ENCODE measurements at regions of chr6 and their contacts with region 1.

Region 1: GRCh38 chr6:81752138-81752920 is at the start of gene TENT5A:
- DNase-seq: peak; percentile 97
- ATAC-seq: peak; percentile 85
- total RNA-seq, gene TENT5A: 69.4 TPM

Region 2: DNA sequence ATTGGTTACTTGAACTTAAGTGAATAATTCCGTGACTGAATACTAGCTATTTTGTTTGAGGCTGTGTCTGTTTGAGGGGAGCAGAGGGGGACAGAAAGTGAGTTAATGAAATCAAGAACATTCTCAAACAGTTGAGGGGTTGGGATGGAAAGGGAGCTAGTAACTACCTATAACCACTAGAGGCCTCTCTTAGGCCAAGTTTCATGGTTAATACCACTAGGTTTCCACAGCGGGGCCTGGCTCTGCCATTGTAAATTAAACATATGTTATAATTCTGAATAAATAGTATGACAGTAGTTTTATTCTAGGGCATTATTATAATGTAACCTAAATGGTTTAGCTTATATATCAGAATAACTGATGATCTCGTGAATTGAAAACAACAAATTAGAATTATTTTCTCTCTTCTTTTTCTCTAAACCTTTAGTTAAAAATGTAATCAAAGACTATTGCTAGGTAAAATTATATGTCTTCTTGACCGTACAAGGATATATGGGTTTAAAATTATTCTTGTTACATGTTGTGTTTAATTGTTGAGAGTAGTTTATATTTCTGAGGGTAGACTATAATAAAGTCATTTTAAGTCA is 1537.8 kb before region 1 on chr6:
- intact Hi-C with region 1: loop called (anchors 5 kb)
- DNase-seq: peak; percentile 38
- ATAC-seq: peak; percentile 77

Region 3: DNA sequence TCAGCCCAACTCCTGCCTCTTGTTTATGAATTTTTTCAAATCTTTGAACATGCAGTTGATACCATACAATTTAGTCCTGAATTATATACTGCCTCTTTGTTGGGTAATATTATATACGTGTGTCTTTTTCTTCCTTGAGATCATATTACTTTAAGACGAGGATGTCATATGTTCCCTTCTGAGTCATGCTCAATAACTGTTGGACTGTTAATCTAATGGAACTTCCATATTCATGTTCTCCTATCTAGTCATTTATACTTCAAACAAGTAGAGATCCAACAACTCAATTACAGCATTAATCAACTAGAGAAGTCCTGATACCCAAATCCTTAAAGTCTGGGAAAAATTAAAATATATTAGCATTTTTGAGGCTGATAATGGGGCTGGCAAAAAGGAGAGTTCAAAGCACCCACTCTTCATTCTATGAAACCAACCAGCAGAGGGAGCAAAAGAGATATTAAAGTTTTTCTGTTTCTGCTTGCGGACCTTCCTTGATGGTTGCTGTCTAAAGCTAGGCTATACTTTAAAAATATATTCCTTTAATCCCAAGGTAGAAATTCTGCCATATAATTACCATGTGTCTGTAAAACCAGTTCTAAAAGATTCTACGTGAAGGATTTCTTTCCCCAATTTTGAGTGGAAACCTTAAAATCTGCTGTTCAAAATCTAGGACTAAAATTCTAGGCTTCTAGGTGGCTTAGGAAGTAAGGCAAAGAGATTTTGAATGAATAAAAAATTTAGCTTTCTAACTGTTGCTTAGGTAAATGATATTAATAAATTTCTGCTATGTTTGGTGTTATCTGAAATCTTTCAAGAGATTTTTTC is 1147.0 kb before region 1 on chr6:
- intact Hi-C with region 1: loop called (anchors 5 kb)
- DNase-seq: no peak
- ATAC-seq: peak; percentile 58

Region 4: DNA sequence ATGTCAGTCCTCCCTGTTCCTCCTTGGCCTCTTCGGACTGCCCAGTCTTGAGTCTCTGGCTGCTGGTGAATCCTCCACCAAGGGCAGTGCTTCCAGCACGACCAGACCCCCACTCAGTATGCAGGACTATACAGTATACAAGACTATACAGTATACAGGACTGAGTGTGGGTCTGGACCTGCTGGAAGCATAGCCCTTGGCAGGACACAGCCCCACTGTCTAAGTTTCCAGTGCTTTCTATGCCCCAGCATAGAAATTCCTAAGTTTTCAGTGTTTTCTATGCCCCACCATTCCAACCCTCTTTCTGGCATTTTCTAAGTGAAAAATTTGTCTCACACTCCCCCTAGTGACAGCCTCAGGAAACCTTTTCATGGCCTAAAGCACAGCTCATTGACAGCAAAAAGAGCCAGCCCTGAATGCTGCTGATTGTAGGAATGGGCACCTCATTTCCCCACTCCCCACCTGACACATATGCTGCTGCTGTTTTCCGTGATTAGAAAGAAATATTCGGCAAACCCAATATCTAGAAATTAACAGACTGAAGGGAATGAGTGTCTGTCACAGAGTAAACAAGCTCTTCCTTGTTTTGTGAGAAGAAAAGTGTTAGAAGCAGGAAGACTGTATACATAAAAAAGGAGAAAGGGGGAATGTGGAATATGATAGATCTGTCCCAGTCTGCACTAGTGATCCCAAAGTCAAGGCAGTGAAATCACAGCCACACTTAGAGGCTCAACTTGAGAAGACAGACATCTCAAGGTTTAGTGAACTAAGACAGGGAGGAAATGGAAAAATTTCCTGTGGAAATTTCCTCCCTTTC is 288.3 kb after region 1 on chr6:
- intact Hi-C with region 1: loop called (anchors 10 kb)
- DNase-seq: no peak
- ATAC-seq: peak; percentile 89

Region 5: GRCh38 chr6:82178077-82178758 is 425.9 kb after region 1 on chr6:
- intact Hi-C with region 1: loop called (anchors 10 kb)
- DNase-seq: no peak
- ATAC-seq: peak; percentile 86

Measured in left ventricle myocardium superior (tissue), 1 donor.